ENCODE measurements at regions of chr15 and their contacts with region 1.

Region 1: DNA sequence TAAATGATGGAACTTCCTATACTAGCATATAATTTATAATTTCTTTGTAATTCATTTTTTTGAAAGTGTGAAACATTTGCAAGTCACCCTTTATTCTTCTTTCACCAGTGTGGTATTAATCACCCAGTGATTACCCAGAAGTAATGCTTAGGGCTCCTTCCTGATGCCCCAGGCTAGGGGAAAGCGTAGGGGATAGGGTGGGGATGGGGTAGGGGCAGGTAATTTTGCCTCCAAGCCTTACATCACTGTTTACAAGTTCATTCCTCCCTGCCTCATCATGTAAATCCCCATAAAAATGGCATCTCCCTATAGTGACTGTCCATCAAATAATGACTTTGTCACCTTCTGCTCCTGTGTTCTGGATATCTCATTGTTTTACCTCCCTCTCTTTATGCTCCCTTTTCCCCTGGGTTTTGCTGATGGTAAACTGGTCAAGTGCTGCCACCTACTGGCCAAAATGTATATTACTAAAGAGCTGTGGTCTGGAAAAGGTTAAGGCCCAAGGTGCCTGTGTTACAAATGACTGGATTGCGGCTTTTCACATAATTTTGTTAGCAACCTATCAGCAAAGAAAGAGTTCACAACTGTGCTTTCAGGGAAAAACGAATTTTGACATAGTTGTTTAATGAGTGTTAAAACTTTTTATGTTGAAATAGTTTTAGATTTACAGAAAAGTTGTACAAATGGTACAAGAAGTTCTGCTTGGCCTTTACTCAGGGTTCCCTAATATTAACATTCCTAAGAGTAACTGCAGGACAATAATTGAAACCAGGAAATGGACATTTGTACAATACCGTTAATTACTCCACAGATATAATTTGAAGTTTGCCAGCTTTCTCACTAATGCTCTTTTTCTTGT is 54.7 kb downstream of the ONECUT1 start:
- DNase-seq: peak; percentile 73
- ATAC-seq: peak; percentile 83
- H3K4me3 ChIP-seq: no peak overlapping the region
- H3K27ac ChIP-seq: no peak overlapping the region
- H3K4me1 ChIP-seq: peaks cover 45% of the 10 kb centered on the region
- H3K27me3 ChIP-seq: no peaks in the 10 kb centered on the region
- CTCF ChIP-seq: peak; percentile 89
- EP300 ChIP-seq: no peak
- POLR2A ChIP-seq: no peak
- RAD21 ChIP-seq: peak; percentile 78

Region 2: DNA sequence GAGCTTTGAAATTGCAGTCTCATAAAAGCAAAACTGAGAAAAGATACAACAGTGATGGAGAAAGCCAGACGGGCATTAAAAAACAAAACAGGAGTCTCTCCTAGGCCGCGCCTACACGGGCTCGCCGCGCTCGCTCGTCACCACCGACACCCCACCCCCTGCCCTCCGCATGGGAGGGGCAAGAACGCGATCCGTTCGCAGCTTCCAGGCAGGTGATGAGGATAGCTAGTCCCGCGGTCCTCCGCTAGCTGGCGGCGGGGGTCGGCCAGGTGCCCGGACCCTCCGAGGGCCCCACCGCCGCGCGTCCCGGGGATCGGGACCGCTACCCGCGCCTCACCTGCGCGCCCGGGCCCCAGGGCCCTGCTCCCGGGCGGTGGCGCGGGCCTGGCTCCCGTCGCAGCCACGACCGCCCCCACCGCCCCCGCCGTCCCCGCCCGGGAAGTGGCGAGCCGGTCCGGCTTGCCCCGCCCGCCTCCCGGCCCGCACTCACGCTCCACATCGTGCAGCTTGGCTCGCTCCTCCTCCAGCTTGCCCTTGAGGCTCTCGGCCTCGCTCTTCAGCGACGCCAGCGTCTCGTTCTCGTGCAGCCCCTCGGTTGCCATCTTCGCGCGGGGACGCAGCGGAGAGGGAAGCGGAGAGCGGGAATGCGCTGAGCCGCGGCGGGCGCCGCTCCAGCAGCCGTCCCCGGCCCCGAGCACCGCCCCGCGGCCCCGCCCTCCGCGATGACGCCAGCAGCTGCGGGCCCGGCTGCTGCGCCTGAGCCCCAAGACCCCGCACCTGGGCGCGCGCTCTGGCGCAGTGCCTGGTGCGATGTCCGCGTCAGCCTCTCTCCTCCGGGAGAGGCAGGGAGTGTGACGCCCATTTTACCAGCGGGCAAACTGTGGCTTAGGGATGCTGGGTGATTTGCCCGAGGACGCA is 555.9 kb before region 1 on chr15:
- CTCF ChIA-PET with region 1: no interaction called
- POLR2A ChIA-PET with region 1: interaction called, 3 read pairs
- in situ Hi-C with region 1: no loop called
- intact Hi-C with region 1: loop called (anchors 10 kb)
- DNase-seq: peak; percentile 57
- ATAC-seq: peak; percentile 85
- H3K4me3 ChIP-seq: peak overlapping the region; percentile 66 to 80 (median 76)
- H3K27ac ChIP-seq: no peak overlapping the region
- H3K4me1 ChIP-seq: peaks cover 54% of the 10 kb centered on the region
- H3K27me3 ChIP-seq: 0 out of 5 replicates have a peak, but pooled peaks cover 0 to 4% of the 10 kb centered on the region in 2 experiments
- CTCF ChIP-seq: no peak
- EP300 ChIP-seq: no peak
- POLR2A ChIP-seq: peak; percentile 38 to 65; a peak in 3 of 4 replicates
- RAD21 ChIP-seq: no peak

Region 3: GRCh38 chr15:52331490-52332240 is 403.8 kb before region 1 on chr15:
- CTCF ChIA-PET with region 1: no interaction called
- POLR2A ChIA-PET with region 1: interaction called, 3 read pairs
- in situ Hi-C with region 1: no loop called
- intact Hi-C with region 1: loop called (anchors 1 kb)
- DNase-seq: peak; percentile 30
- ATAC-seq: peak; percentile 73
- H3K4me3 ChIP-seq: no peak overlapping the region
- H3K27ac ChIP-seq: no peak overlapping the region
- H3K4me1 ChIP-seq: peaks cover 19% of the 10 kb centered on the region
- H3K27me3 ChIP-seq: no peaks in the 10 kb centered on the region
- CTCF ChIP-seq: peak; percentile 66
- EP300 ChIP-seq: no peak
- POLR2A ChIP-seq: no peak
- RAD21 ChIP-seq: no peak

Region 4: GRCh38 chr15:52528991-52529926 is 206.2 kb before region 1 on chr15:
- CTCF ChIA-PET with region 1: no interaction called
- POLR2A ChIA-PET with region 1: interaction called, 5 read pairs
- in situ Hi-C with region 1: no loop called
- intact Hi-C with region 1: loop called (anchors 10 kb)
- DNase-seq: no peak
- ATAC-seq: peak; percentile 77
- H3K4me3 ChIP-seq: peak overlapping the region; percentile 41 to 78 (median 56); a peak in 5 of 6 replicates
- H3K27ac ChIP-seq: no peak overlapping the region
- H3K4me1 ChIP-seq: peaks cover 23% of the 10 kb centered on the region
- H3K27me3 ChIP-seq: peaks cover 3 to 42% of the 10 kb centered on the region in 2 experiments; a peak in 4 of 5 replicates
- CTCF ChIP-seq: 0 out of 2 replicates have a peak, but pooled peaks have one; percentile 23
- EP300 ChIP-seq: no peak
- POLR2A ChIP-seq: no peak
- RAD21 ChIP-seq: 0 out of 2 replicates have a peak, but pooled peaks have one; percentile 23

Region 5: GRCh38 chr15:52546031-52546751 is 189.3 kb before region 1 on chr15:
- CTCF ChIA-PET with region 1: no interaction called
- POLR2A ChIA-PET with region 1: no interaction called
- in situ Hi-C with region 1: no loop called
- intact Hi-C with region 1: loop called (anchors 5 kb)
- DNase-seq: no peak
- ATAC-seq: peak; percentile 76
- H3K4me3 ChIP-seq: no peak overlapping the region
- H3K27ac ChIP-seq: no peak overlapping the region
- H3K4me1 ChIP-seq: no peaks in the 10 kb centered on the region
- H3K27me3 ChIP-seq: no peaks in the 10 kb centered on the region
- CTCF ChIP-seq: no peak
- EP300 ChIP-seq: no peak
- POLR2A ChIP-seq: peak in 1 of 2 experiments; percentile 40; a peak in 2 of 4 replicates
- RAD21 ChIP-seq: no peak

Region 6: DNA sequence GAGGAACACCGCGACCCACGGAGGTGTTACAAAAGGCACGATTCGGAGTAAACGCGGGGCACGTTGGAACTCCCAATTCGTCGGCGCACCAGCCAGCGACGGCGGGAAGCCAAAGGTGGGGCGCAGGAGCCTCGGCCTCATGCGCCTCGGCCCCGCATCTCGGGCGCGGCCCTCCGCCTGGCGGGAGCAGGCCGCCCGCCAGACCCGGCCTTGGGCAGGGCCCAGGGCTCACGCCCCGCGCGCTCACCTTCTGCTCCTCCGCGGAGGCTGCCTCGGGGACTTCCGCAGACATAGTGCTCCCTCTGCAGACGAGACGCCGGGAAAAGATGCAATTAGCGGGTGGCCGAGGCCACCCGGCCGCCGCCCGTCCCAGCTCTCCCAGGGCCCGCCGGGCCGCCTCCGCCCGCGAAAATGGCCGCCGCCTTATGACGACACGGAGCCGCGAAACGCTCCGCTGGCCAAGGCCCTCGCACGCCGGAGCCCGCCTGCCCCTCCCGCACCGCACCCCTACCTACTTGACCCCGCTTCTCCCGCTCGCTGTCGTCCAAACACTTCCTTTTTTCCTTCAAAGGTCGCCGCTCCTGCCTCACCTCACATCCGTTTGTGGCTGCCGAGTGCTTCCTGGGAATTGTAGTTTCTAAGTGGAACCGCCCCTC is 166.7 kb before region 1 on chr15 and contains the start of gene ARPP19:
- CTCF ChIA-PET with region 1: no interaction called
- POLR2A ChIA-PET with region 1: no interaction called
- in situ Hi-C with region 1: no loop called
- intact Hi-C with region 1: loop called (anchors 5 kb)
- DNase-seq: peak; percentile 94
- ATAC-seq: peak; percentile 93
- H3K4me3 ChIP-seq: peak within 1 kb of the TSS; percentile 64 to 83 (median 80)
- H3K27ac ChIP-seq: peak within 1 kb of the TSS; percentile 87
- H3K4me1 ChIP-seq: peaks cover 48% of the 10 kb centered on the region
- H3K27me3 ChIP-seq: no peaks in the 10 kb centered on the region; a peak in 1 of 5 replicates
- CTCF ChIP-seq: no peak
- EP300 ChIP-seq: peak in 1 of 2 experiments; percentile 60; a peak in 1 of 4 replicates
- POLR2A ChIP-seq: peak; percentile 68 to 69
- RAD21 ChIP-seq: no peak
- total RNA-seq, gene ARPP19: 123 and 213 TPM in 2 replicates

Region 7: GRCh38 chr15:52679232-52680040 is 56.0 kb before region 1 on chr15 and contains the start of gene ATOSA:
- CTCF ChIA-PET with region 1: no interaction called
- POLR2A ChIA-PET with region 1: interaction called, 3 read pairs
- in situ Hi-C with region 1: no loop called
- intact Hi-C with region 1: loop called (anchors 1 kb)
- DNase-seq: peak; percentile 82
- ATAC-seq: peak; percentile 91
- H3K4me3 ChIP-seq: peak within 1 kb of the TSS; percentile 84 to 98 (median 94)
- H3K27ac ChIP-seq: peak within 1 kb of the TSS; percentile 96
- H3K4me1 ChIP-seq: peaks cover 14% of the 10 kb centered on the region
- H3K27me3 ChIP-seq: no peaks in the 10 kb centered on the region; a peak in 1 of 5 replicates
- CTCF ChIP-seq: 0 out of 2 replicates have a peak, but pooled peaks have one; percentile 10
- EP300 ChIP-seq: 0 out of 4 replicates have a peak, but pooled peaks of 1 of the 2 experiments have one; percentile 10
- POLR2A ChIP-seq: peak in 1 of 2 experiments; percentile 64; a peak in 2 of 4 replicates
- RAD21 ChIP-seq: no peak
- total RNA-seq, gene ATOSA: 5.5 and 6.6 TPM in 2 replicates

Measured in HepG2 (cell line).